H1 (cell line): ENCODE measurements at regions of chr19 and their contacts with region 1.

Region 1: DNA sequence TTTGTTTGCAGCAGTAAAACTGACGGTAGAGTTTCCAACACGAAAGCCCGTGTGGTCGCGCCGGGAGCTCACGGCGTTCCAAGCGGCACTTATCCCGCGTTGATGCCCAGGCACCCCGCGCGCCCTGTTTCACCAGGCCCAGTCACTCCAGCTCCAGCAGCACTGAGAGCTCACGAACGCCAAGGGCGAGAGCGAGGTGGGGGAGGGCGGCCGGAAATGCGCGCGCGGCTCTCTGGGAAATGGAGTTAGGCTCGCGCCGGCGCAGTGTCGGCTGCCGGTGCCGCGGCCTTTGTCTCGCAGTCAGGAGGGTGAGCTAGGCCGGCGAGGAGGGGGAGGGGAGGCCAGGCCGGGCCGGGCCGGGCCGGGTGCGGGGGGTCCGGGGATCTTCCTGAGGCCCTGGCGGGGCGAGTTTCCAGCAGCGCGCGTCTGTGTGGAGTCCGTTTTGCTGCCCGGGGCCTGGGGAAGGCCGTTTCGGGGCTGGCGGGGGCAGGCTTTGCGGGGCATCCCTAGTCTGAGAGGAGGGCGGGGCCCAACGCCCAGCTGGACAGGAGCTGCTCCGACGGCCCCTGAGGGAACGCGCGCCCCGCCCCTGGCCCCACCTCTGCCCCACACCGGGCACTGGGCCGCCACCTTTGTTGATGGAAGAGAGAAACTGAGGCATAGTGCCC is at the start of gene ZNF135:
- DNase-seq: peak; percentile 64 to 90
- H3K4me3 ChIP-seq: peak within 1 kb of the TSS; percentile 38 to 63 (median 44)
- H3K27ac ChIP-seq: peak within 1 kb of the TSS; percentile 80
- H3K4me1 ChIP-seq: peaks cover 5 to 21% (median 14%) of the 10 kb centered on the region in 4 experiments
- H3K27me3 ChIP-seq: no peaks in the 10 kb centered on the region
- CTCF ChIP-seq: no peak
- EP300 ChIP-seq: no peak
- POLR2A ChIP-seq: peak in 1 of 2 experiments; percentile 91; a peak in 2 of 3 replicates
- RAD21 ChIP-seq: no peak; a peak in 1 of 4 replicates
- total RNA-seq, gene ZNF135: 5.2 and 5.3 TPM in 2 replicates

Region 2: GRCh38 chr19:57708641-57709361 is 350.3 kb before region 1 on chr19 and contains the start of gene ZNF154:
- CTCF ChIA-PET with region 1: no interaction called
- POLR2A ChIA-PET with region 1: no interaction called
- DNase-seq: peak; percentile 65 to 81
- H3K4me3 ChIP-seq: peak within 1 kb of the TSS; percentile 91 to 97 (median 94)
- H3K27ac ChIP-seq: peak within 1 kb of the TSS; percentile 95
- H3K4me1 ChIP-seq: peaks cover 0 to 9% (median 4%) of the 10 kb centered on the region in 4 experiments; a peak in 5 of 7 replicates
- H3K27me3 ChIP-seq: no peaks in the 10 kb centered on the region
- CTCF ChIP-seq: no peak
- EP300 ChIP-seq: no peak
- POLR2A ChIP-seq: peak; percentile 53 to 92
- RAD21 ChIP-seq: no peak
- total RNA-seq, gene ZNF154: 9.5 and 11.6 TPM in 2 replicates

Region 3: GRCh38 chr19:58002384-58003173 is 56.6 kb before region 1 on chr19 and contains the start of gene ZNF606:
- CTCF ChIA-PET with region 1: no interaction called
- POLR2A ChIA-PET with region 1: interaction called, 25 read pairs
- DNase-seq: peak in 1 of 2 experiments; percentile 87
- H3K4me3 ChIP-seq: peak within 1 kb of the TSS; percentile 77 to 97 (median 84)
- H3K27ac ChIP-seq: peak within 1 kb of the TSS; percentile 87
- H3K4me1 ChIP-seq: peaks cover 0 to 5% (median under 1%) of the 10 kb centered on the region in 4 experiments; a peak in 2 of 7 replicates
- H3K27me3 ChIP-seq: no peaks in the 10 kb centered on the region; a peak in 1 of 7 replicates
- CTCF ChIP-seq: no peak
- EP300 ChIP-seq: no peak
- POLR2A ChIP-seq: peak; percentile 77 to 86
- RAD21 ChIP-seq: no peak
- total RNA-seq, gene ZNF606: 17.5 and 19.3 TPM in 2 replicates

Region 4: GRCh38 chr19:58033741-58034471 is 25.2 kb before region 1 on chr19 and contains the start of gene ZSCAN1:
- CTCF ChIA-PET with region 1: interaction called, 14 read pairs
- POLR2A ChIA-PET with region 1: interaction called, 40 read pairs
- DNase-seq: peak; percentile 70 to 96
- H3K4me3 ChIP-seq: peak within 1 kb of the TSS; percentile 49 to 77 (median 60)
- H3K27ac ChIP-seq: peak within 1 kb of the TSS; percentile 59; the same call in 1 of the 2 replicates
- H3K4me1 ChIP-seq: peaks cover 0 to 19% (median 14%) of the 10 kb centered on the region in 4 experiments; a peak in 6 of 7 replicates
- H3K27me3 ChIP-seq: peaks cover 0 to 6% (median 0%) of the 10 kb centered on the region in 4 experiments; a peak in 3 of 7 replicates
- CTCF ChIP-seq: no peak
- EP300 ChIP-seq: no peak
- POLR2A ChIP-seq: 0 out of 3 replicates have a peak, but pooled peaks of 1 of the 2 experiments have one; percentile 40
- RAD21 ChIP-seq: no peak; a peak in 1 of 4 replicates
- total RNA-seq, gene ZSCAN1: 0.69 and 1.2 TPM in 2 replicates

Region 5: GRCh38 chr19:58091251-58091995 is 32.3 kb after region 1 on chr19:
- CTCF ChIA-PET with region 1: interaction called, 40 read pairs
- POLR2A ChIA-PET with region 1: interaction called, 13 read pairs
- DNase-seq: no peak
- H3K4me3 ChIP-seq: no peak overlapping the region
- H3K27ac ChIP-seq: no peak overlapping the region
- H3K4me1 ChIP-seq: 0 out of 7 replicates have a peak, but pooled peaks cover 0 to 2% (median 0%) of the 10 kb centered on the region in 4 experiments
- H3K27me3 ChIP-seq: no peaks in the 10 kb centered on the region
- CTCF ChIP-seq: peak in 1 of 3 experiments; percentile 23; a peak in 1 of 4 replicates
- EP300 ChIP-seq: no peak
- POLR2A ChIP-seq: no peak
- RAD21 ChIP-seq: peak; percentile 27 to 31; a peak in 2 of 4 replicates

Region 6: GRCh38 chr19:58182989-58183816 is 124.1 kb after region 1 on chr19 and contains the start of gene ZNF274:
- CTCF ChIA-PET with region 1: no interaction called
- POLR2A ChIA-PET with region 1: interaction called, 11 read pairs
- DNase-seq: peak; percentile 84 to 97
- H3K4me3 ChIP-seq: peak within 1 kb of the TSS; percentile 94 to 97 (median 96)
- H3K27ac ChIP-seq: peak within 1 kb of the TSS; percentile 99
- H3K4me1 ChIP-seq: no peaks in the 10 kb centered on the region; a peak in 1 of 7 replicates
- H3K27me3 ChIP-seq: no peaks in the 10 kb centered on the region
- CTCF ChIP-seq: no peak
- EP300 ChIP-seq: no peak
- POLR2A ChIP-seq: peak; percentile 87 to 96
- RAD21 ChIP-seq: no peak
- total RNA-seq, gene ZNF274: 25.1 and 27.7 TPM in 2 replicates